Stomach (tissue), 19 donors: ENCODE measurements at regions of chr6 and their contacts with region 1.

Region 1: GRCh38 chr6:44475779-44476434 is 88.4 kb downstream of the CDC5L start:
- DNase-seq: peak; percentile 82 to 95
- H3K4me3 ChIP-seq: no peak overlapping the region
- H3K27ac ChIP-seq: no peak overlapping the region
- H3K4me1 ChIP-seq: peaks cover 6 to 9% (median 7%) of the 10 kb centered on the region in 4 donors
- H3K27me3 ChIP-seq: no peaks in the 10 kb centered on the region
- CTCF ChIP-seq: peak in 5 of 7 experiments; percentile 80 to 88 (median 86)
- EP300 ChIP-seq: no peak
- POLR2A ChIP-seq: no peak

Region 2: DNA sequence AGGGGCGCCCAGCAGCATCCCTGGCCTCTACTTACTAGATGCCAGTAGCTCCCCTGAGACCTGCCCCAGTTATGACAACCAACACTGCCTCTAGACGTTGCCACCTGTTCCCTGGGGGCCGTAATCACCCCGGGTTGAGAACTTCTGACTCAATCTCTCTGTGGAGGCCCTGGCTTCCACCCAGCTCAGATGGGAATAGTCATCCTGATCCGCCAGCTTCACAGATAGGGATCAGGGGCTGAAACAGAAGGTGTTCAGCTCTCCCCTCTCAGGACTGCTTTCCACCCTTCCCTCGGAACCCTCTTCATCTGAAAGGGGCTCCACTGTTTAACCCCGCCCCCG is 313.9 kb before region 1 on chr6:
- intact Hi-C with region 1: no loop called
- DNase-seq: no peak
- H3K4me3 ChIP-seq: no peak overlapping the region
- H3K27ac ChIP-seq: no peak overlapping the region
- H3K4me1 ChIP-seq: peaks cover 2 to 14% (median 7%) of the 10 kb centered on the region in 4 donors
- H3K27me3 ChIP-seq: peaks cover 0 to 21% (median 0%) of the 10 kb centered on the region in 3 donors
- CTCF ChIP-seq: no peak
- EP300 ChIP-seq: no peak
- POLR2A ChIP-seq: no peak

Region 3: DNA sequence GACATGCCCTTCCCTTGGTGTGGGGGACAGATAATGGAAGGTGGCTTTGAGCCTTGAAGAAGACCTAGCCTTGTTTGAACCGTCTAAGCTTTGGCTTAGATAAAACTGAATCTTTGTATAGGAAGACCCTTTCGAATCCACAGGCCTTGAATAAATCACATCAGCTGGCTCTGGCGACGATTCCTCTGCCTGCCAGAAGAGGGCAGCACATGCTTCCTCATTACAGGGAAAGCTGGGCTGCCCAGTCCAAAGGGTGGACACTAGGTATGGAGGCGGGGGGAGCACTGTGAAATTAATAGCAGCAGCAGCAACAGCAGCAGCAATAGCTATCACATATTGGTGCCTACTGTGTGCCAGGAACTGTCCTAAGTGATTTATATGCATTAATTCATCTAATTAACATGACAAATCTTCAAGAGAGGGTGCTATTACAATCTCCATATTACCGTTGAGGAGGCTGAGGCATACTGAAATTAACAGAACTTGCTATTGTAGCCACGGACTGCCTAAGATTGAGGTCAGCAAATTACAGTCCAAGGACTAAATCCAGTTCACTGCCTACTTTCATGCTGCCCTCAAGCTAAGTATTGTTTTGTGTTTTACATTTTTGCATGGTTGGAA is 1454.6 kb after region 1 on chr6:
- intact Hi-C with region 1: loop called (anchors 10 kb)
- DNase-seq: peak; percentile 71 to 84
- H3K4me3 ChIP-seq: no peak overlapping the region
- H3K27ac ChIP-seq: no peak overlapping the region
- H3K4me1 ChIP-seq: peaks cover 0 to 8% (median 3%) of the 10 kb centered on the region in 4 donors
- H3K27me3 ChIP-seq: peaks cover 0 to 2% (median 0%) of the 10 kb centered on the region in 3 donors
- CTCF ChIP-seq: peak in 5 of 7 experiments; percentile 80 to 99 (median 92)
- EP300 ChIP-seq: no peak
- POLR2A ChIP-seq: no peak